Calu3 (cell line): ENCODE measurements at regions of chr4 and their contacts with region 1.

Region 1: DNA sequence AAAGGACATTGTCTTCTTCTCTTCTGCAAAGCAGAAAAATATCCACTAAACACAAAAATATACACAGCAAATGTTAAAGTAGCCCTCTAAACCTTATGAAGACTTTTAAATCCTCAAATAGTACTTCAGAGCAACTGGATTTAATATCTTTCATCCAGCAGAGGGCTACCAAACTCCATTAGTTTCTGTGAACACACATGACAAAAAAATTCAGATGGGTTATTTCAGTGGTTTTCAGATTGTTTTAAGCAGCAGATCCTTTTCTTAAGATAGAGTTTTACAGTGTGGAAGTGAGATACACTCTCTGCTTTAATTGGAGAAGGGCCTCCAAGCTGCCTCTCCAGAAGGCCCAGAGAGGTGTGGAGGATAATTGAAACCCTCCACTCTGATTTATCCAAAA is 56.7 kb downstream of the ANK2 start:
- DNase-seq: no peak
- H3K4me3 Mint-ChIP-seq: no peak overlapping the region
- H3K27ac Mint-ChIP-seq: no peak overlapping the region
- H3K4me1 Mint-ChIP-seq: peaks cover 13% of the 10 kb centered on the region
- H3K27me3 Mint-ChIP-seq: no peaks in the 10 kb centered on the region
- CTCF ChIP-seq: no peak

Region 2: DNA sequence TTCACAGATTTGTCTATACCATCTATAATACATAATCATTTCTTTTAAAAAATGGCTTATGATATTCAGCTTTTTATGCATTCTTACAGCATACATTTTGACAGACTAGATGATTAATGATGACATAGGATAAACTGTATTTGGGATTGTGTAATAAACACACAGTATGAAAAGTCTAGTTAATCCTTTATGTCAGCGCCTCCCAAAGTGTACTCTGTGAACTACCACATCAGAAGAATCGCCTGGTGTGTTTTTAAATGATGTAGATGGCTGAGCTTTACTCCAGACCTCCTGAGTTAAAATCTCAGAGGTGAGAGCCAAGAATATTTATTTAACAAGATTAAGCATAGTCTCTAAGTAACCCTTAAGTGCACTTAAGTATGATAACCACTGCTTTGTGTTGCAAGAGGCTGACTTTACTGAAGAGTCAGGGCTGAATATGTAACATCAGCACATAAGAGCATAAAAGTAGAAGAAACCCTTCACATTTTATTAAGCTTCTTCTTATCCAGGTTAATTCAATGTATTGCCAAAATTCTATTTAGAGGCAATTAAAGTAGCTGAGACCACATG is 47.5 kb after region 1 on chr4:
- CTCF ChIA-PET with region 1: no interaction called
- intact Hi-C with region 1: loop called (anchors 1 kb)
- DNase-seq: no peak
- H3K4me3 Mint-ChIP-seq: no peak overlapping the region
- H3K27ac Mint-ChIP-seq: no peak overlapping the region
- H3K4me1 Mint-ChIP-seq: peaks cover 8% of the 10 kb centered on the region
- H3K27me3 Mint-ChIP-seq: no peaks in the 10 kb centered on the region
- CTCF ChIP-seq: no peak

Region 3: GRCh38 chr4:113179996-113180395 is 73.9 kb after region 1 on chr4:
- CTCF ChIA-PET with region 1: no interaction called
- intact Hi-C with region 1: loop called (anchors 2 kb)
- DNase-seq: no peak
- H3K4me3 Mint-ChIP-seq: no peak overlapping the region
- H3K27ac Mint-ChIP-seq: no peak overlapping the region
- H3K4me1 Mint-ChIP-seq: no peaks in the 10 kb centered on the region
- H3K27me3 Mint-ChIP-seq: no peaks in the 10 kb centered on the region
- CTCF ChIP-seq: no peak

Region 4: GRCh38 chr4:113248320-113248719 is 142.2 kb after region 1 on chr4:
- CTCF ChIA-PET with region 1: no interaction called
- intact Hi-C with region 1: loop called (anchors 1 kb)
- DNase-seq: peak; percentile 8
- H3K4me3 Mint-ChIP-seq: no peak overlapping the region
- H3K27ac Mint-ChIP-seq: no peak overlapping the region
- H3K4me1 Mint-ChIP-seq: no peaks in the 10 kb centered on the region
- H3K27me3 Mint-ChIP-seq: no peaks in the 10 kb centered on the region
- CTCF ChIP-seq: no peak

Region 5: DNA sequence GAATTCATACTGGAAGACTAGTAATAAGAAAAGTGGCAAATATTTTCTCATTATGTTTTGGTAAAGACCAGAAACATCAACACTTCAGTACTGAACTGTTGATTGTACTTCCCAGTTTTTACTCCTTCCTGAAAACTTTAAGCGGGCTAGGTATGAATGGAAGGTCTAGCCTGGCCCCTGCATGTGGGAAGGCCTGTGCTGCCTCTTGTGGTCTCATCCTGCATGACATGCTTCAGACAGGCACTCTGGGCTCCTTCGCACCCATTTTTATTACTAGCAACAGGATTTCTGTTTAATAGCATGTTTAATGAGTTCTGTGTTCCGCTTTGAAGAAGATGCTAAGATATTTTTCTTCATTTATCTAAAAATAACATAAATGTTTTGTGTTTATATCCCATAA is 222.4 kb after region 1 on chr4:
- CTCF ChIA-PET with region 1: no interaction called
- intact Hi-C with region 1: loop called (anchors 10 kb)
- DNase-seq: no peak
- H3K4me3 Mint-ChIP-seq: no peak overlapping the region
- H3K27ac Mint-ChIP-seq: no peak overlapping the region
- H3K4me1 Mint-ChIP-seq: no peaks in the 10 kb centered on the region
- H3K27me3 Mint-ChIP-seq: no peaks in the 10 kb centered on the region
- CTCF ChIP-seq: peak; percentile 34